Ascending aorta (tissue), 2 donors: ENCODE measurements at regions of chr12 and their contacts with region 1.

Region 1: DNA sequence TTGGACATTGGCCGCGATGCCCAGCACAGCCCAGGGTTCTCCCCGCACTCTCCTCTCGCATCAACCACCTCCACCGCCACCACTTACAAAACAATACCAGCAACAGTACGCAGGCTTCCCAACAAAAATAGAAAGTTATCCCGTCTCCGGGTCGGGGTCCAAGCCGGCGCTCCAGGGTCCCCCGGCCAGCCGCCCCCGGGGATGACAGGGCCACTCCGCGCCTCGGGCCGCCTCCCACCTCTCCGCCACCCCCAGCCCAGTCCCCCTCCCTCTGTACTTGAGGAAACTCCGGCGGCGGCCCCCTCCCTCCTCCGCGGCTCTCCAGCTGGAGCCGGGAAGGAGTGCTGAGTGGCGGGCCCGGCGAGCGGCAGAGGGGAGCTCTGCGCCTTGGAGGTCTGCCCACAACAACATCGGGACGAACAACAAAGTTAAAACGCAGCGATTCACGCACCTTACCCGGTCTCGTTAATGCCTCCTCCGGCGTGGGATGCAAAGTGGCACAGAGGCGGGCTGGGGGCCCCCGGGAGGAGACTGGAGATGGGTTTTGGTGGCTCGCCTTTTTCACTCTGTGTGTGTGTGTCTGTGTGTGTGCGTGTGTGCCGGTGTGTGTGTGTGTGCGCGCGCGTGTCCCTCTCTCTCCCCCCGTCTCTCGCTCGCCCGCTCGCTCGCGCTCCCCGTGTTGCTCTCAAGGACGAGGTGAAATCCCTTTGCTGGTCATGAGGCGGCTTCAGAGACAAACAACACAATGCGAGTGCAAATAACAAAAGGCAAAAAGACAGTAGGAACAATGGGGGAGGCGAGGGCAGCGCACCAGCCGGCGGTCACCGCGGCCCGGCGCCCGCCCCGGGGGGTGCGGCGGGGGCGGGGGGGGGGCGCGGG is 386.8 kb downstream of the BCAT1 start:
- DNase-seq: peak in 1 of 2 donors; percentile 86
- H3K4me3 ChIP-seq: peak overlapping the region; percentile 71 to 98
- H3K27ac ChIP-seq: peak overlapping the region; percentile 93 to 94
- H3K4me1 ChIP-seq: peaks cover 0 to 7% of the 10 kb centered on the region in 2 donors
- H3K27me3 ChIP-seq: no peaks in the 10 kb centered on the region
- CTCF ChIP-seq: no peak

Region 2: DNA sequence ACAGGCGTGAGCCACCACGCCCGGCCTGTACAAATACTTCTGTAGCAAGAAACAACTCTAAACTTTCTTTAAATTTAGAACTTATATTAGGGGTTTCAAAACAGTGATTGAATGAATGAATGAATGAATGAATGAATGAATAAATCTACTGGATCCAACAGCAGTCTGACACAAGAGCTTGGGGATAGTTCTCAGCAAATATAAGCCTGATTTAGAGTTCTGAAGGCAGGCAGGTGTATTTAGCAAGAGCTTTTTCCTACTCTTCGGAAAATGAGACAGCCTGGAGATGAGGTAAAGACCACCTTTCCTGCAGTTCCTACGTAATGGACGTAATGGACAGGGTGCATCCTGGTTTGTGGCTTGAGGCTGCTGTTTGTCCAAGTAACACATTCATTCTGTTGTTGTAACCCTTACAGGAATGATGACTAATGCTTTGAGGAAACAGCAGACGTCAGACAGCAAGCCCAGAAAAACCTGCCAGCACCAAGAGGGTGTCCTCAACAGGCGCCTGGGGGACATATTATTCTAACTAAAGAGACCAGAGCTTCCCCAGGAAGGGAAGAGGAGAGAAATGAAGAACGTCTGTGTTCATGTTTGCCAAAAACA is 335.3 kb before region 1 on chr12:
- intact Hi-C with region 1: loop called (anchors 5 kb)
- DNase-seq: peak; percentile 9 to 81
- H3K4me3 ChIP-seq: no peak overlapping the region
- H3K27ac ChIP-seq: peak overlapping the region; percentile 30 to 42
- H3K4me1 ChIP-seq: peaks cover 7 to 14% of the 10 kb centered on the region in 2 donors
- H3K27me3 ChIP-seq: no peaks in the 10 kb centered on the region
- CTCF ChIP-seq: no peak

Region 3: GRCh38 chr12:24425601-24425970 is 136.5 kb before region 1 on chr12:
- intact Hi-C with region 1: loop called (anchors 5 kb)
- DNase-seq: no peak
- H3K4me3 ChIP-seq: no peak overlapping the region
- H3K27ac ChIP-seq: peak overlapping the region; percentile 61 to 72
- H3K4me1 ChIP-seq: peaks cover 0 to 8% of the 10 kb centered on the region in 2 donors
- H3K27me3 ChIP-seq: no peaks in the 10 kb centered on the region
- CTCF ChIP-seq: no peak

Region 4: GRCh38 chr12:24488091-24488596 is 74.0 kb before region 1 on chr12:
- intact Hi-C with region 1: loop called (anchors 2 kb)
- DNase-seq: no peak
- H3K4me3 ChIP-seq: no peak overlapping the region
- H3K27ac ChIP-seq: peak overlapping the region; percentile 13 to 19
- H3K4me1 ChIP-seq: peaks cover 0 to 18% of the 10 kb centered on the region in 2 donors
- H3K27me3 ChIP-seq: no peaks in the 10 kb centered on the region
- CTCF ChIP-seq: no peak

Region 5: GRCh38 chr12:24539646-24540045 is 22.5 kb before region 1 on chr12:
- intact Hi-C with region 1: loop called (anchors 2 kb)
- DNase-seq: no peak
- H3K4me3 ChIP-seq: no peak overlapping the region
- H3K27ac ChIP-seq: no peak overlapping the region
- H3K4me1 ChIP-seq: peaks cover 0 to 29% of the 10 kb centered on the region in 2 donors
- H3K27me3 ChIP-seq: no peaks in the 10 kb centered on the region
- CTCF ChIP-seq: no peak

Region 6: GRCh38 chr12:24596768-24597388 is 34.8 kb after region 1 on chr12:
- intact Hi-C with region 1: loop called (anchors 2 kb)
- DNase-seq: no peak
- H3K4me3 ChIP-seq: no peak overlapping the region
- H3K27ac ChIP-seq: no peak overlapping the region
- H3K4me1 ChIP-seq: peaks cover 0 to 5% of the 10 kb centered on the region in 2 donors
- H3K27me3 ChIP-seq: no peaks in the 10 kb centered on the region
- CTCF ChIP-seq: peak in 2 of 3 experiments; percentile 65 to 72

Region 7: DNA sequence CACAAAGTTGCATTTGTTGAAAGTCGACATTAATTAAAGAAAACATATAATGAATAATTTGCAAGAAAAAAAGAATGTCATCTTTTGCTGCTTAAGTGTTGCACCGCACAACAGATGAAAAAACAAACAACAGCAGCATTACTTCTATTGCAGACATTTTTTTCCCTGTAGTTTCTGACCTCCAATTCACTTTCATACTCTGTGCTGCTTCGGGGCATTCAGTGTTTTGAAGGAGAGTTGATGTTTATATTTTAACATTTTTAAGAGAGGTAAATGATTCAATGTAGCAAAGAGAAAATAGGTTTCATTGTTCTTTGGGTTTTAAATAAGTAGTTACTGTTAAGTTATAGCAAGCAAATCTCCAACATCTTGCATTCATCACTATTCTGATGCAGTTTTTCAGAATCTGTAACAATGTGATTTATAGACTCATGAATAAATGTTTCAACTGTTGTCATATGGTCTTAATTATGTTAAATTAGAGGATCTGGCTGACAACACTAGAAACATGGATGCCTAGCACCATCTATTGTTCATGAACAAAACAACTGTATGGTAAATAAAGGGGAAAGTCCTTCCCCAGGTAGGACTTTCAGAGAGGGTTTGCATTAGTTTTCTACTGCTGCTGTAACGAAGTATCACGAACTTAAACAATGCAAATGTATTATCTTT is 218.7 kb after region 1 on chr12:
- intact Hi-C with region 1: no loop called
- DNase-seq: no peak
- H3K4me3 ChIP-seq: no peak overlapping the region
- H3K27ac ChIP-seq: no peak overlapping the region
- H3K4me1 ChIP-seq: no peaks in the 10 kb centered on the region
- H3K27me3 ChIP-seq: no peaks in the 10 kb centered on the region
- CTCF ChIP-seq: no peak